Caco-2 (cell line): ENCODE measurements at regions of chr1 and their contacts with region 1.

Region 1: GRCh38 chr1:234538930-234539649 is 60.1 kb upstream of the TARBP1 start:
- DNase-seq: no peak
- H3K4me3 ChIP-seq: no peak overlapping the region
- H3K4me3 Mint-ChIP-seq: no peak overlapping the region
- H3K27ac Mint-ChIP-seq: peak overlapping the region; percentile 83
- H3K4me1 ChIP-seq: peaks cover 55% of the 10 kb centered on the region
- H3K4me1 Mint-ChIP-seq: peaks cover 36% of the 10 kb centered on the region
- H3K27me3 ChIP-seq: no peaks in the 10 kb centered on the region
- H3K27me3 Mint-ChIP-seq: no peaks in the 10 kb centered on the region
- CTCF ChIP-seq: no peak

Region 2: GRCh38 chr1:234564642-234565037 is 25.6 kb after region 1 on chr1:
- CTCF ChIA-PET with region 1: no interaction called
- POLR2A ChIA-PET with region 1: no interaction called
- intact Hi-C with region 1: loop called (anchors 2 kb)
- DNase-seq: peak; percentile 49
- H3K4me3 ChIP-seq: no peak overlapping the region
- H3K4me3 Mint-ChIP-seq: no peak overlapping the region
- H3K27ac Mint-ChIP-seq: peak overlapping the region; percentile 15
- H3K4me1 ChIP-seq: peaks cover 42% of the 10 kb centered on the region
- H3K4me1 Mint-ChIP-seq: peaks cover 24% of the 10 kb centered on the region
- H3K27me3 ChIP-seq: no peaks in the 10 kb centered on the region
- H3K27me3 Mint-ChIP-seq: no peaks in the 10 kb centered on the region
- CTCF ChIP-seq: no peak

Region 3: DNA sequence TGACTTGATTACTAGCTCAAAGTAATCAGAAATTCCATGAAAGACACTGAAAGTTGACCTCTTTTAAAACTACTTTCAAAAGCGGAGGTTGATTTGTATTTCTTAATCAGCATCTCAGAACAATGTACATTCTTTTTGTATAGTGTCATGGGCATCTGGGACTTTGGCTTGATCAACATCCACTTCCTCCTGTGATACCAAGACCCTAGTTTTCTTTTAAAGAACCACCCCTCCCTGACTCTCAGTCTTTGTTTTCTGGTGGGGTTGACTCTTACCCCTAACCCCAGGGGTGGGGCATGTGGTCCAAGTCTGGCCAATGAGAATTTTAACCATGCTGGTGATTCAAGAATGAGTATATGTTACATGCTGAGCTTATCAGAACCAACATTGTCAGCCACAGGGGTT is 92.6 kb after region 1 on chr1:
- CTCF ChIA-PET with region 1: no interaction called
- POLR2A ChIA-PET with region 1: no interaction called
- intact Hi-C with region 1: no loop called
- DNase-seq: peak; percentile 69 to 70
- H3K4me3 ChIP-seq: no peak overlapping the region
- H3K4me3 Mint-ChIP-seq: no peak overlapping the region
- H3K27ac Mint-ChIP-seq: peak overlapping the region; percentile 76
- H3K4me1 ChIP-seq: peaks cover 50% of the 10 kb centered on the region
- H3K4me1 Mint-ChIP-seq: peaks cover 47% of the 10 kb centered on the region
- H3K27me3 ChIP-seq: no peaks in the 10 kb centered on the region
- H3K27me3 Mint-ChIP-seq: no peaks in the 10 kb centered on the region
- CTCF ChIP-seq: no peak